Endothelial cell of umbilical vein (primary cell): ENCODE measurements at regions of chr1 and their contacts with region 1.

Region 1: DNA sequence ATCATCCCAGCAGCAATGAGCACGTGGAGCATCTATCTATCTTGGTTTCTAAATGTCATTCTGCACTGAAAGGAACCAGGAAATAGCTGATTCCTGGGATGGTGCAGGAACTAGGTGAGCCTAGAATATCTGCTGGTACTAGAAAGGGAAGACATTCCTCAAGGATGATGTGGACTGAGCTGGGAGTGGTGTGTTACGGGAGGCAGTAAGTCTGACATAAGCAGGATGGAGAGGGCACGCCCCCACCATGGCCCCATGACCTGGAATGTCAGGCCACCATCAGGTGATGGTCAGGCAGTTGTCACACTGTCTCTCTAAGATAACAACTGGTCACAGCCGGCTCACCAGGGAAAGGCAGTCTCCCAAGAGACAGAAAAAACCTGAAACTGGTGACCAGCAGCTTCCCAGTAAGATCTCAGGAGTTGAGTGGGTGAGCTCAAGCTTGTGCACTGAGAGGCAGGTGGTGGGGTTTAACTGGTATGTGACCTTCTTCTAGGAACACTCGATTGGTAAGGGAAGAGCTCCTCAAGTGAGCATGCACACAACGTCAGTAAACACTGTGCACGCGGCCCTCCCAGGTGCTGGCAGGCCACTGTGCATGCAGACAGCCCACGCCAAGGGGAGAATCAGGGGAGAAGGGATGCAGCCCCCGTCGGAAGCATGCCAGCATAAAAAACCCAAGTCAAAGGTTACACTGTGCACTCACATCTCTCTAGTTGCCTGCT is 148.7 kb downstream of the ADSS2 start:
- DNase-seq: peak; percentile 53
- H3K4me3 ChIP-seq: no peak overlapping the region
- H3K27ac ChIP-seq: peak overlapping the region; percentile 13
- H3K4me1 ChIP-seq: peaks cover 52% of the 10 kb centered on the region
- H3K27me3 ChIP-seq: no peaks in the 10 kb centered on the region
- CTCF ChIP-seq: no peak
- POLR2A ChIP-seq: no peak

Region 2: GRCh38 chr1:243748706-243749283 is 554.3 kb before region 1 on chr1:
- CTCF ChIA-PET with region 1: interaction called, 3 read pairs
- POLR2A ChIA-PET with region 1: no interaction called
- dilution Hi-C with region 1: no loop called
- intact Hi-C with region 1: loop called (anchors 1 kb)
- DNase-seq: peak; percentile 79
- H3K4me3 ChIP-seq: no peak overlapping the region
- H3K27ac ChIP-seq: no peak overlapping the region
- H3K4me1 ChIP-seq: peaks cover 4% of the 10 kb centered on the region
- H3K27me3 ChIP-seq: no peaks in the 10 kb centered on the region
- CTCF ChIP-seq: peak; percentile 55 to 58
- POLR2A ChIP-seq: no peak

Region 3: GRCh38 chr1:244283772-244284171 is 19.3 kb before region 1 on chr1:
- CTCF ChIA-PET with region 1: interaction called, 18 read pairs
- POLR2A ChIA-PET with region 1: no interaction called
- dilution Hi-C with region 1: no loop called
- intact Hi-C with region 1: no loop called
- DNase-seq: no peak
- H3K4me3 ChIP-seq: no peak overlapping the region
- H3K27ac ChIP-seq: no peak overlapping the region
- H3K4me1 ChIP-seq: no peaks in the 10 kb centered on the region
- H3K27me3 ChIP-seq: no peaks in the 10 kb centered on the region
- CTCF ChIP-seq: no peak
- POLR2A ChIP-seq: no peak

Region 4: GRCh38 chr1:244289976-244290375 is 13.1 kb before region 1 on chr1:
- CTCF ChIA-PET with region 1: interaction called, 18 read pairs
- POLR2A ChIA-PET with region 1: no interaction called
- dilution Hi-C with region 1: no loop called
- intact Hi-C with region 1: no loop called
- DNase-seq: no peak
- H3K4me3 ChIP-seq: no peak overlapping the region
- H3K27ac ChIP-seq: no peak overlapping the region
- H3K4me1 ChIP-seq: no peaks in the 10 kb centered on the region
- H3K27me3 ChIP-seq: no peaks in the 10 kb centered on the region
- CTCF ChIP-seq: no peak
- POLR2A ChIP-seq: no peak

Region 5: DNA sequence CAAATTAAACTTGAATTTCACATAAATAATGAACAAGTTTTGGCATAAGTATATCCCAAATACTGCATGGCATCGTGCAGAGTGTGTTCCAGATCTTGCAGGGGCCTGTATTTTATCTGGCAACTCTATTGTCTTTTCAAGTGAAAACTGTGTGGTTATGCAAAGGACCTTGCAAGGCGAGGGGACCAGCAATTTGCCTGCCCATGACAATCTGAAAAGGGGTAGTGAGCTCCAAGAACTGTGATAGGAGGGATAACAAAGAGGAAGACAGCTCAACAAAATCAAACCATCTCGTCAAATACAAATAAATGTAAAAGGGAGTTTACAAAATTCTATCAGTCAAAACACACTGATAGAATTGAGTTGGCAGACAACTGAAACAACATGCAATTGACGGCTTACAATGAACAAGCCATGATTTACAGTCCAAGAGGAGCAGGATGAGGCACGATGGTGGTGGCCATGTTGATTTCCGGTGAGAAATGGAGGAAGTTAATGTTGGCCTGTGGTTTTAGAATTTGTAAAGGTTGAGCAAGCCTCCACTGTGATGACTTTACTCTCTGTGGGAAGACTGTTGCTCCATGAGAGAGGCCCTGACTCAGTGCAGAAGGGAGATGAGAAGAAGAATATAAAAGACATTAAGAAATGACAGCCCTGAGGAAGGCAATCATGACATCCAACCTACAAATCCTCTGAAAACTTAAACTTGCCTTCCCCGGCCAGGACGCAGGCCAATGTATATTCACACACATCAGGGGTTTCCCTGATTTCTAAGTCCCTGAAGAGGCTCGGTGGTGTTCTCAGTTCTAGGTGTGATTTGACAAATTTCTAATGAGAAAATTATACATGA is 16.5 kb after region 1 on chr1:
- CTCF ChIA-PET with region 1: interaction called, 3 read pairs
- POLR2A ChIA-PET with region 1: no interaction called
- dilution Hi-C with region 1: no loop called
- intact Hi-C with region 1: loop called (anchors 1 kb)
- DNase-seq: no peak
- H3K4me3 ChIP-seq: no peak overlapping the region
- H3K27ac ChIP-seq: peak overlapping the region; percentile 16
- H3K4me1 ChIP-seq: peaks cover 49% of the 10 kb centered on the region
- H3K27me3 ChIP-seq: no peaks in the 10 kb centered on the region
- CTCF ChIP-seq: no peak
- POLR2A ChIP-seq: no peak

Region 6: DNA sequence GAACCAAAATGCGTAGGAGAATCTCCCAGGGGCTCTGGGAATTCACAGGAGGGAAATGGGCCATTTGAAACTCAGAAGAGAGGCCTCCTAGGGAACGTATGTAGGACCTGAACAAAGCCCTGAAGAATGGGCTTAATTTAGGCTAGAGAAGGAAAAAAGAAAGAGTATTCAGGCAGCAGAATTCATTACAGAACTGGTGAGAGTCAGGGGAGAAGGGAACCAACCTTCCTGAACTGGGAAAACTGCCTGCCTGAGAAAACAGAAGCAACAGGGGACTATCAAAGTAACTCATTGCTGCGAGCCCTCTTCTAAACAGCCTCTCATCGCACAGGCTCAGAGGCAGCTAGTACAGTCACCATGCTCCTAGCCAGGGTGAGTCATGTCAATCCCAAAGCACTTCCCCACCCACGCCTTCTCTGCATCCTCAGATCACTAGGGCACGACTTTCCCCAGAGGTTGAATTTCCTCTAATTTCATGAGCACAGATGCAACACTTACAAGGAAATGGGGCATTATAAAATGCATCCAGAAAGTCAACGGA is 50.6 kb after region 1 on chr1:
- CTCF ChIA-PET with region 1: interaction called, 4 read pairs
- POLR2A ChIA-PET with region 1: no interaction called
- dilution Hi-C with region 1: no loop called
- intact Hi-C with region 1: loop called (anchors 1 kb)
- DNase-seq: peak; percentile 98
- H3K4me3 ChIP-seq: no peak overlapping the region
- H3K27ac ChIP-seq: peak overlapping the region; percentile 72
- H3K4me1 ChIP-seq: peaks cover 39% of the 10 kb centered on the region
- H3K27me3 ChIP-seq: no peaks in the 10 kb centered on the region
- CTCF ChIP-seq: no peak
- POLR2A ChIP-seq: peak; percentile 58

Region 7: GRCh38 chr1:244414543-244414942 is 111.5 kb after region 1 on chr1:
- CTCF ChIA-PET with region 1: interaction called, 22 read pairs
- POLR2A ChIA-PET with region 1: no interaction called
- dilution Hi-C with region 1: no loop called
- intact Hi-C with region 1: loop called (anchors 1 kb)
- DNase-seq: peak; percentile 64
- H3K4me3 ChIP-seq: no peak overlapping the region
- H3K27ac ChIP-seq: no peak overlapping the region
- H3K4me1 ChIP-seq: no peaks in the 10 kb centered on the region
- H3K27me3 ChIP-seq: no peaks in the 10 kb centered on the region
- CTCF ChIP-seq: peak; percentile 17 to 24
- POLR2A ChIP-seq: no peak

Region 8: GRCh38 chr1:245585252-245585959 is 1282.4 kb after region 1 on chr1:
- CTCF ChIA-PET with region 1: no interaction called
- POLR2A ChIA-PET with region 1: no interaction called
- dilution Hi-C with region 1: no loop called
- intact Hi-C with region 1: no loop called
- DNase-seq: no peak
- H3K4me3 ChIP-seq: no peak overlapping the region
- H3K27ac ChIP-seq: no peak overlapping the region
- H3K4me1 ChIP-seq: no peaks in the 10 kb centered on the region
- H3K27me3 ChIP-seq: no peaks in the 10 kb centered on the region
- CTCF ChIP-seq: no peak
- POLR2A ChIP-seq: no peak